ENCODE measurements at regions of chr21 and their contacts with region 1.

Region 1: DNA sequence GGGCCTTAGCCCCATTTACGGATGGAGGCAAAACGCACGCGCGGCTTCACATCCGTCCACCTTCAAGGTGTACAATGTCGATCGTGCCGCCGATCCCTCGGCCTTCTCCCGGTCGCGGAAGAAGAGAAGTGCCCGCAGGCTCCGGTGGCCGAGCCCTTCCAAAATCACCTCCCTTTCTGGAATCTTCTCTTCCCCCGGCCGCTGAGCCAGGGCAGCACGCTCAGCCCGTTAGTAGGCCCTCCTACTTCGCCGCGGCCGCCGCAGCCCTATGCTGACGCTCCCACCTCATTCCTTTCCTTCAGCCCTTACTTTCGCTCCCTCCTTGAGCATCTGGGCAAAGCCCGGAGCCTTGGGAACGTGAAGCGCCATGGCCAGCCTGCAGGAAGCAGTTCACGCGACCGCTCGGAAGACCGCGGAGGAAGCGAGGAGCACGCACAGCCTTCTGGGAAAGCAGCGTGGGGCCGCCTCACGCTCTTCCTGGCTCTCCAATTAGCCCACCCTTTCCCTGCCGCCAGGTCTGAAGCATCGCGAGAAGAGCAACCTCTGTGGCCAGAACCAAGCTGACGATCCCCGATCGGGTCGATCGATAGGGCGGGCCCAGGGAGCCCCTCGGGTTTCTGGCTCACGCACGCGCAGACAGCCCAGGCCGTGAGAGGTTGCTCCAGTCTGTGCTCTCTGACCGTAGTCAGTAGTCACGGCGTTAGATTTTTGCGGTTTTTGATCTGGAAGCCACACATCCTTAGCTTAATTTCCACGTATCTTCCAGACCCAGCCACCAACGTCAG is at the start of gene CCT8:
- DNase-seq: peak; percentile 99
- ATAC-seq: peak; percentile 92
- H3K4me3 Mint-ChIP-seq: peak within 1 kb of the TSS; percentile 100
- H3K27ac Mint-ChIP-seq: peak within 1 kb of the TSS; percentile 99
- H3K4me1 Mint-ChIP-seq: peaks cover 53% of the 10 kb centered on the region
- H3K27me3 Mint-ChIP-seq: no peaks in the 10 kb centered on the region
- CTCF ChIP-seq: no peak
- total RNA-seq, gene CCT8: 474 to 489 TPM

Region 2: GRCh38 chr21:28992526-28993292 is 80.7 kb before region 1 on chr21 and contains the start of gene LTN1:
- CTCF ChIA-PET with region 1: no interaction called
- POLR2A ChIA-PET with region 1: interaction called, 10 read pairs
- intact Hi-C with region 1: loop called (anchors 2 kb)
- DNase-seq: peak; percentile 100
- ATAC-seq: peak; percentile 91
- H3K4me3 Mint-ChIP-seq: peak within 1 kb of the TSS; percentile 82
- H3K27ac Mint-ChIP-seq: peak within 1 kb of the TSS; percentile 92
- H3K4me1 Mint-ChIP-seq: peaks cover 41% of the 10 kb centered on the region
- H3K27me3 Mint-ChIP-seq: no peaks in the 10 kb centered on the region
- CTCF ChIP-seq: no peak
- total RNA-seq, gene LTN1: 26.7 to 28.0 TPM

Region 3: GRCh38 chr21:29002442-29003144 is 70.8 kb before region 1 on chr21:
- CTCF ChIA-PET with region 1: no interaction called
- POLR2A ChIA-PET with region 1: interaction called, 12 read pairs
- intact Hi-C with region 1: no loop called
- DNase-seq: peak; percentile 96
- ATAC-seq: peak; percentile 100
- H3K4me3 Mint-ChIP-seq: peak overlapping the region; percentile 91
- H3K27ac Mint-ChIP-seq: peak overlapping the region; percentile 97
- H3K4me1 Mint-ChIP-seq: peaks cover 13% of the 10 kb centered on the region
- H3K27me3 Mint-ChIP-seq: no peaks in the 10 kb centered on the region
- CTCF ChIP-seq: no peak

Region 4: DNA sequence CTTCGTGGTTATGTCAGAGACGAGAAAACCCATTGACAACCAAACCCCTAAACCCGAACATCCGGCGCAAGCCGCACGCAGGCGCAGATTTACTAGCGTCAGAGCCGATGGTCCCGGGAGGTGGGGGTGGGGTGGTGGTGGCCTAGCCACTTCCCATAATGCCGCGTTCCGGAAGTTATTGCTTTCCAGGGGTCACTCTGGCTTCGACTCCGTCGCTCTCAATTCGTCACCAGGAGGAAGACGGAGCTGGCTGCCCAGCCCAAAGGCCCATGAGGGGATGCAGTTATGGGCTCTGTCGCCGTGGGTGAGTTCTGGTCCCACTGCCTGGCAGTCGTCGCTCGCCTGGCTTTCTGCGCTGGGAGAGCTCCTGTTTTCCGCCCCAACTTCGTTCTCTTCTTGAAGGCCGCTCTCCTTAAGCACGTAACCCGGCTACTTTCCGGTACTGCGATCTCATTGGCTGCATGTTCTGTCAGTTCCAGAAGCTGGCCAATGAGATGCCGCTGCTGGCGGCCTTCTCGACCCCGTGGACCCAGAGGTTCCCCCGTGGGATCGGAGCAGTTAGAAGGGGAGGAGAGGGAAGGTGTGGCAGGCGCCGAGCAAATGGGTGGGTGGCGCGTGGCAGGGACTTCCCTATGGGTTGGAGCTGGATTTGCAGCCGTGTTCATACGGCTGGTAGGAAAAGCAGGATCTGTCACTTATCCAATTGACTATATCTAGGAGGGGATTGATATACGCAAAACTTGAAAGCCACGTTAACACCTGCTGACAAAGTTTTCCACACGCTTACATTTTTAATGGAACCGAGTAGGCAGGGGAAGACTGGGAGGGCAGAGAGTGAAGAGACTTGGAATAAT is 48.7 kb before region 1 on chr21 and contains the start of gene USP16:
- CTCF ChIA-PET with region 1: interaction called, 4 read pairs
- POLR2A ChIA-PET with region 1: interaction called, 80 read pairs
- intact Hi-C with region 1: loop called (anchors 2 kb)
- DNase-seq: peak; percentile 95
- ATAC-seq: peak; percentile 93
- H3K4me3 Mint-ChIP-seq: peak within 1 kb of the TSS; percentile 87
- H3K27ac Mint-ChIP-seq: peak within 1 kb of the TSS; percentile 96
- H3K4me1 Mint-ChIP-seq: peaks cover 58% of the 10 kb centered on the region
- H3K27me3 Mint-ChIP-seq: no peaks in the 10 kb centered on the region
- CTCF ChIP-seq: no peak
- total RNA-seq, gene USP16: 39.9 TPM

Region 5: DNA sequence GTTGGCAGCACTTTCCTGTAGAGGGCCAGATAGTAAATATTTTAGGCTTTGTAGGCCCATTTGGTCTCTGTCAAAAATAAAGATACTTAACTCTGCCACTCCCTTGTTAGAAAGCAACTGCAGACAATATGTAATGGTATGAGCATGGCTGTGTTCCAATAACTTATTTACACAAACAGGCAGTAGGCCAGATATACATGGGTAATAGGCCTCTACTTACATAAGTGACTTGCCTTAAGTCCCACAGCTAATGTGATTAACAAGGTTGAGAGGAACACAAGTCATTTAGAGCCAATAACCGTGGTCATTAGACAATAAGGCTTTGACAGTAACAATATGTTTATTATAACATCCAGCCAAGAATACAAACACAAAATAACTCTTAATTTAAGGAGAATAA is 17.4 kb before region 1 on chr21:
- CTCF ChIA-PET with region 1: interaction called, 5 read pairs
- POLR2A ChIA-PET with region 1: interaction called, 21 read pairs
- intact Hi-C with region 1: no loop called
- DNase-seq: no peak
- ATAC-seq: no peak
- H3K4me3 Mint-ChIP-seq: no peak overlapping the region
- H3K27ac Mint-ChIP-seq: no peak overlapping the region
- H3K4me1 Mint-ChIP-seq: no peaks in the 10 kb centered on the region
- H3K27me3 Mint-ChIP-seq: no peaks in the 10 kb centered on the region
- CTCF ChIP-seq: no peak

Region 6: DNA sequence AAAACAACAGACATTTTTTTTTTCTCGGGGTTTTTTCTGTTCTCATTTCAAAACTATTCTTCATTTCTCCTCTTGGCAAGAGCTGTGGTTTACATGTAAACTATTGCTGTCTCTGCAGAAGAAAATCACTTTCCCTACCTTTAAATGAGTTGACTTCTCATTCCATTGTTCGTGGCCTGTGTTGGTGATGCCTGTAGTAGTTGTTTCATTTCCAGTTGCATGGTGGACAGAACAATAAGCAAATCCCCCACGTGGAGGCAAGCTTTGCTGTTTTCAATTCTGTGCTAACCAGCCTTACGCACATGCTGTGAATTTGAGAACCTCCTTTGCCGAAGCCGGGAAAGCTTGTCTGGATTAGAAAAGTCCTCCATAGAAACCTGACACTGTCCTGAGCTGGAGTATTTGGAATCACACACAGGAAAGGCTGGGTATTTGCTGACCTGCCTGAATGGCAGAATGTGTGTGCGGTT is 30.9 kb after region 1 on chr21:
- CTCF ChIA-PET with region 1: no interaction called
- POLR2A ChIA-PET with region 1: no interaction called
- intact Hi-C with region 1: no loop called
- DNase-seq: no peak
- ATAC-seq: no peak
- H3K4me3 Mint-ChIP-seq: no peak overlapping the region
- H3K27ac Mint-ChIP-seq: no peak overlapping the region
- H3K4me1 Mint-ChIP-seq: no peaks in the 10 kb centered on the region
- H3K27me3 Mint-ChIP-seq: no peaks in the 10 kb centered on the region
- CTCF ChIP-seq: no peak

Measured in activated CD8-positive, alpha-beta T cell treated with anti-CD3 and anti-CD28 coated beads for 36 hours (primary cell).